CD4-positive, alpha-beta T cell (primary cell): ENCODE measurements at regions of chr10 and their contacts with region 1.

Region 1: DNA sequence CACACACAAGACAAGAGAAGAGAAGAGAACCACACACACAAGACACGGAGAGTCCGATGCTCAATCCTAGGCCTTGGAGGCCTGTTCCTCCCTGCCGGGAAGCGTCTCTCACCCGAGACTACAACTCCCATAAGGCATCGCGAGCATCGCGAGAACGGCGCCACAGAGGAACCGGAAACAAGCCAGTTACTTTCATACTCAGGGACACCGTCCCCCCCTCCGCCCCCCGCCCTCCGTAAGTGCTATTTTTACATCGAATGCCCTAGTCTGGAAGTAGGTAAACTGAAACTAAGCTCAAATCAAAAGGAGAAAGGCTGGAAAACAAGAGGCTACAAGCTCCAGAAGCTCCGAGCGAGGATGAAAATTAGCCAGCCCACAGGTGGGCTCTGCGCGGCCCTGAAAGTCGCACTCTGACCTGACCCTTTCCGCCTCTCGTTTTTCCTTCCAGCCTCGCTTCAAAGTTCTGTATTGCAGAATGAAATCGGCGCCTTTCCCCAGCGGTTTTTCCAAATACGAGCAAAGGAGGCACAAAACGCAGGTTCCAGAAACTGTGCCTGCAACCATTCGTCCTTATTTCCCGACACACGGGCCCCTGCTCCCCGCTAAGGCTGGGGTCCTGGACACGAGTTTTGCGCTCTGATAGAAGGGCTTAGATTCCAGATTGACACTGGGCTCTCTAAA is 11.5 kb upstream of the DNAJC12 start:
- DNase-seq: peak; percentile 87 to 96 (median 93)
- ATAC-seq: peak; percentile 99
- H3K4me3 ChIP-seq: peak overlapping the region; percentile 91
- H3K4me3 Mint-ChIP-seq: peak overlapping the region; percentile 94
- H3K27ac ChIP-seq: peak overlapping the region; percentile 78 to 93
- H3K27ac Mint-ChIP-seq: peak overlapping the region; percentile 91
- H3K4me1 ChIP-seq: peaks cover 12% of the 10 kb centered on the region
- H3K4me1 Mint-ChIP-seq: peaks cover 9% of the 10 kb centered on the region
- H3K27me3 ChIP-seq: no peaks in the 10 kb centered on the region
- H3K27me3 Mint-ChIP-seq: no peaks in the 10 kb centered on the region
- CTCF ChIP-seq: no peak

Region 2: DNA sequence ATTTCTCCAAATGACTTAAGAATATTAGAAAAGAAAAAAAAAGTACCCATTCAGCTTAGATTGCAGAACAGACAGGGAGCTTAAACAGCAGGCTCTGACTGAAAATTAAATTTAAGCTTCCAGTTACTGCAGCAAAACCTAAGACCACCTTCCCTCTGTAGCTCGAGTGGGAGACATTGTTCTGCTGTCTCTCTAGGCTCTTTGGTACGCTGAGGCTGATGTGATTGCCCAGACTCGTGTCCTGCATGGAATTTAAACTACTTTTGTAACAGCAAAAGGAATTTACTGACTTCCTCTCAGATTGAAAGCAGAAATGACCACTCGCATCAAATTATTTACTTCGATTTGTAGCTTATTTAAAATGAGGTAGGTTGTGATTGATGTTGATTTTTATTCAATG is 799.1 kb before region 1 on chr10:
- CTCF ChIA-PET with region 1: no interaction called
- POLR2A ChIA-PET with region 1: no interaction called
- intact Hi-C with region 1: no loop called
- DNase-seq: no peak
- ATAC-seq: no peak
- H3K4me3 ChIP-seq: no peak overlapping the region
- H3K4me3 Mint-ChIP-seq: no peak overlapping the region
- H3K27ac ChIP-seq: no peak overlapping the region
- H3K27ac Mint-ChIP-seq: no peak overlapping the region
- H3K4me1 ChIP-seq: no peaks in the 10 kb centered on the region
- H3K4me1 Mint-ChIP-seq: no peaks in the 10 kb centered on the region
- H3K27me3 ChIP-seq: no peaks in the 10 kb centered on the region
- H3K27me3 Mint-ChIP-seq: no peaks in the 10 kb centered on the region
- CTCF ChIP-seq: no peak

Region 3: GRCh38 chr10:67884313-67884841 is 34.9 kb after region 1 on chr10 and contains the start of gene SIRT1:
- CTCF ChIA-PET with region 1: no interaction called
- POLR2A ChIA-PET with region 1: interaction called, 25 read pairs
- intact Hi-C with region 1: loop called in 1 of 2 experiments (anchors 2 kb)
- DNase-seq: peak; percentile 88 to 97 (median 92)
- ATAC-seq: peak; percentile 70
- H3K4me3 ChIP-seq: peak within 1 kb of the TSS; percentile 87
- H3K4me3 Mint-ChIP-seq: peak within 1 kb of the TSS; percentile 95
- H3K27ac ChIP-seq: peak within 1 kb of the TSS; percentile 78 to 82
- H3K27ac Mint-ChIP-seq: peak within 1 kb of the TSS; percentile 91
- H3K4me1 ChIP-seq: peaks cover 24% of the 10 kb centered on the region
- H3K4me1 Mint-ChIP-seq: peaks cover 46% of the 10 kb centered on the region
- H3K27me3 ChIP-seq: no peaks in the 10 kb centered on the region
- H3K27me3 Mint-ChIP-seq: no peaks in the 10 kb centered on the region
- CTCF ChIP-seq: no peak
- total RNA-seq, gene SIRT1: 57.6 to 62.9 TPM

Region 4: GRCh38 chr10:68010426-68010940 is 161.0 kb after region 1 on chr10:
- CTCF ChIA-PET with region 1: no interaction called
- POLR2A ChIA-PET with region 1: no interaction called
- intact Hi-C with region 1: no loop called
- DNase-seq: no peak
- ATAC-seq: no peak
- H3K4me3 ChIP-seq: no peak overlapping the region
- H3K4me3 Mint-ChIP-seq: no peak overlapping the region
- H3K27ac ChIP-seq: no peak overlapping the region
- H3K27ac Mint-ChIP-seq: no peak overlapping the region
- H3K4me1 ChIP-seq: no peaks in the 10 kb centered on the region
- H3K4me1 Mint-ChIP-seq: peaks cover 8% of the 10 kb centered on the region
- H3K27me3 ChIP-seq: no peaks in the 10 kb centered on the region
- H3K27me3 Mint-ChIP-seq: no peaks in the 10 kb centered on the region
- CTCF ChIP-seq: no peak